Caki2 (cell line): ENCODE measurements at regions of chr11 and their contacts with region 1.

Region 1: GRCh38 chr11:68643585-68643984 is 40.8 kb upstream of the GAL start:
- DNase-seq: no peak

Region 2: GRCh38 chr11:68690671-68691401 is 47.3 kb after region 1 on chr11:
- in situ Hi-C with region 1: loop called (anchors 10 kb)
- DNase-seq: no peak